Naive thymus-derived CD4-positive, alpha-beta T cell (primary cell): ENCODE measurements at regions of chr6 and their contacts with region 1.

Region 1: GRCh38 chr6:45377554-45378333 is at the start of gene SUPT3H:
- DNase-seq: peak; percentile 87 to 96 (median 89)
- ATAC-seq: peak; percentile 90
- H3K4me3 ChIP-seq: peak within 1 kb of the TSS; percentile 75
- H3K4me3 Mint-ChIP-seq: peak within 1 kb of the TSS; percentile 89 to 100 (median 98)
- H3K27ac ChIP-seq: peak within 1 kb of the TSS; percentile 86
- H3K27ac Mint-ChIP-seq: peak within 1 kb of the TSS; percentile 96 to 100 (median 98)
- H3K4me1 ChIP-seq: peaks cover 0 to 14% of the 10 kb centered on the region in 2 donors
- H3K4me1 Mint-ChIP-seq: peaks cover 14 to 35% (median 28%) of the 10 kb centered on the region in 7 donors
- H3K27me3 ChIP-seq: no peaks in the 10 kb centered on the region
- H3K27me3 Mint-ChIP-seq: no peaks in the 10 kb centered on the region
- total RNA-seq, gene SUPT3H: 10.0 to 16.0 (median 12.7) TPM

Region 2: GRCh38 chr6:44932651-44933091 is 445.1 kb before region 1 on chr6:
- CTCF ChIA-PET with region 1: interaction called, 3 read pairs
- POLR2A ChIA-PET with region 1: interaction called, 3 read pairs
- intact Hi-C with region 1: loop called (anchors 1 to 2 kb)
- DNase-seq: peak in 7 of 9 donors; percentile 46 to 66 (median 58)
- ATAC-seq: peak; percentile 91
- H3K4me3 ChIP-seq: peak overlapping the region; percentile 37
- H3K4me3 Mint-ChIP-seq: peak overlapping the region; percentile 78 to 98 (median 88)
- H3K27ac ChIP-seq: peak overlapping the region; percentile 71
- H3K27ac Mint-ChIP-seq: peak overlapping the region; percentile 92 to 99 (median 96)
- H3K4me1 ChIP-seq: peaks cover 17 to 42% of the 10 kb centered on the region in 2 donors
- H3K4me1 Mint-ChIP-seq: peaks cover 26 to 67% (median 60%) of the 10 kb centered on the region in 7 donors
- H3K27me3 ChIP-seq: no peaks in the 10 kb centered on the region
- H3K27me3 Mint-ChIP-seq: no peaks in the 10 kb centered on the region

Region 3: DNA sequence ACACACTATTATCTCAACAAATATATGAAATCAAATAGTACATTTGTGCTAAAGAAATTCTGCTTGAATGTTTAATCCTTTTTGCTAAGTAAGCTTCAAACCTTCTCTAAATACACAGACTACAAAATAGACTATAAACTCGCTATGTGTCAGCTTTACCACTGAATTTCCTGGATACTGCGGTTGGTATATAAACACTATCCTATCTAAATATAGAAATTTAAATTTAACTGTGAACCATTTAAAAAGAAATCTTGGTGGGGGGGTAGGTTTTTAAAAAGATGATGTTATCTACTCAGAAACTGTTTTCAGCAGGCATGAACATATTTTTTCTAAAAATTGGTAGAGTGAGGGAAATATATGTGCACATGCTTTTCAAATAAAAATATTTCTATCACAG is 356.1 kb before region 1 on chr6:
- CTCF ChIA-PET with region 1: no interaction called
- POLR2A ChIA-PET with region 1: no interaction called
- intact Hi-C with region 1: loop called in 1 of 2 experiments (anchors 5 kb)
- DNase-seq: peak in 7 of 9 donors; percentile 6 to 55 (median 28)
- ATAC-seq: peak; percentile 67
- H3K4me3 ChIP-seq: no peak overlapping the region
- H3K4me3 Mint-ChIP-seq: peak overlapping the region in 2 of 10 donors; percentile 6 to 7
- H3K27ac ChIP-seq: no peak overlapping the region
- H3K27ac Mint-ChIP-seq: peak overlapping the region in 2 of 9 donors; percentile 23 to 34
- H3K4me1 ChIP-seq: peaks cover 0 to 4% of the 10 kb centered on the region in 2 donors
- H3K4me1 Mint-ChIP-seq: peaks cover 9 to 20% (median 19%) of the 10 kb centered on the region in 7 donors
- H3K27me3 ChIP-seq: no peaks in the 10 kb centered on the region
- H3K27me3 Mint-ChIP-seq: no peaks in the 10 kb centered on the region

Region 4: DNA sequence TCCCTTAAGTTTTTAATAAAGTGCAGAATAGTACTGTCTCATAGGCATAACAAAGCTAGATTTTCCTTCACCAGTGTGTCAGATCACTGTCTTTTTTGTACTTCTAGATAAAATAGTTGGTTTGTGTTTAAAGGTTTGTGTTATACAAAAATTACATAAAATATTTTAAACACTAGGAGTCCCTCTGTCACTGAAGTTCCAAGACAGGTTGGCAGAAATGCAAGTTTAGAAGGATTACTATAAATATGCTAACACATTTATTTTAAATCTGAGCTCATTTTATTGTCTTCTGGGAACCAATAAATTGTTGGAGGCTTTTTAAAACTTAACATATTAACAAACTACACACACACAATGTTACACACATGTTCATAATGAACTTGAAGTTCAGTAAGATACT is 80.4 kb before region 1 on chr6:
- CTCF ChIA-PET with region 1: interaction called, 3 read pairs
- POLR2A ChIA-PET with region 1: interaction called, 10 read pairs
- intact Hi-C with region 1: loop called (anchors 1 to 5 kb)
- DNase-seq: no peak
- ATAC-seq: no peak
- H3K4me3 ChIP-seq: no peak overlapping the region
- H3K4me3 Mint-ChIP-seq: no peak overlapping the region
- H3K27ac ChIP-seq: no peak overlapping the region
- H3K27ac Mint-ChIP-seq: peak overlapping the region in 6 of 9 donors; percentile 4 to 56 (median 19)
- H3K4me1 ChIP-seq: peaks cover 0 to 14% of the 10 kb centered on the region in 2 donors
- H3K4me1 Mint-ChIP-seq: peaks cover 21 to 74% (median 43%) of the 10 kb centered on the region in 7 donors
- H3K27me3 ChIP-seq: no peaks in the 10 kb centered on the region
- H3K27me3 Mint-ChIP-seq: no peaks in the 10 kb centered on the region

Region 5: DNA sequence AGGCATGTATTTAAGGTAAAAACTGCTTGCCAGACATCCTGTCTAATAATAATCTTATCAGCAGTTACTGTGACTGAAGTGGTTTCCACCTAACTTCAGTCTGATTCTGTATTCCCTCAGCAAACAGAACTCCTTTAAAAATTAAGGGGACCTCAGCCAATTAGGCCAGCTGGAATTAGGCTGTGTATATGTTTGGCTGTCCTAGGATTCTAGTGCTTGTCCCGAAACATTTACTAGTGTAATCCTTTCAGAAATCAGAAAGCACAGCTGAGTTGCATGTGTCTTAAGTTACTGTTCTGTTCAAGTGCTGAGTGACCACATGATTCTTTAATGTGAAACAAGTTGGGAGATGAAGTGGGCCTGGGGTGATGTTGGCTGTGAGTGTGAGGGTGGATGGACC is 120.8 kb after region 1 on chr6:
- CTCF ChIA-PET with region 1: no interaction called
- POLR2A ChIA-PET with region 1: no interaction called
- intact Hi-C with region 1: no loop called
- DNase-seq: no peak
- ATAC-seq: no peak
- H3K4me3 ChIP-seq: no peak overlapping the region
- H3K4me3 Mint-ChIP-seq: no peak overlapping the region
- H3K27ac ChIP-seq: no peak overlapping the region
- H3K27ac Mint-ChIP-seq: no peak overlapping the region
- H3K4me1 ChIP-seq: peaks cover 34 to 37% of the 10 kb centered on the region in 2 donors
- H3K4me1 Mint-ChIP-seq: peaks cover 47 to 69% (median 50%) of the 10 kb centered on the region in 7 donors
- H3K27me3 ChIP-seq: no peaks in the 10 kb centered on the region
- H3K27me3 Mint-ChIP-seq: no peaks in the 10 kb centered on the region

Region 6: GRCh38 chr6:45586216-45587171 is 208.8 kb after region 1 on chr6:
- CTCF ChIA-PET with region 1: no interaction called
- POLR2A ChIA-PET with region 1: interaction called, 3 read pairs
- intact Hi-C with region 1: loop called (anchors 1 to 2 kb)
- DNase-seq: peak; percentile 11 to 93 (median 86)
- ATAC-seq: peak; percentile 93
- H3K4me3 ChIP-seq: peak overlapping the region; percentile 4
- H3K4me3 Mint-ChIP-seq: peak overlapping the region; percentile 76 to 89 (median 81)
- H3K27ac ChIP-seq: peak overlapping the region; percentile 9
- H3K27ac Mint-ChIP-seq: peak overlapping the region; percentile 59 to 97 (median 89)
- H3K4me1 ChIP-seq: peaks cover 48 to 67% of the 10 kb centered on the region in 2 donors
- H3K4me1 Mint-ChIP-seq: peaks cover 40 to 70% (median 69%) of the 10 kb centered on the region in 7 donors
- H3K27me3 ChIP-seq: no peaks in the 10 kb centered on the region
- H3K27me3 Mint-ChIP-seq: no peaks in the 10 kb centered on the region

Region 7: GRCh38 chr6:46129629-46130511 is 752.1 kb after region 1 on chr6 and contains the start of gene ENPP4:
- CTCF ChIA-PET with region 1: no interaction called
- POLR2A ChIA-PET with region 1: no interaction called
- intact Hi-C with region 1: loop called in 1 of 2 experiments (anchors 2 kb)
- DNase-seq: peak; percentile 78 to 98 (median 91)
- ATAC-seq: peak; percentile 100
- H3K4me3 ChIP-seq: peak within 1 kb of the TSS; percentile 98
- H3K4me3 Mint-ChIP-seq: peak within 1 kb of the TSS; percentile 94 to 99 (median 98)
- H3K27ac ChIP-seq: peak within 1 kb of the TSS; percentile 73
- H3K27ac Mint-ChIP-seq: peak within 1 kb of the TSS; percentile 86 to 97 (median 92)
- H3K4me1 ChIP-seq: peaks cover 15 to 18% of the 10 kb centered on the region in 2 donors
- H3K4me1 Mint-ChIP-seq: peaks cover 19 to 59% (median 46%) of the 10 kb centered on the region in 7 donors
- H3K27me3 ChIP-seq: no peaks in the 10 kb centered on the region
- H3K27me3 Mint-ChIP-seq: peaks cover 0 to 4% (median 0%) of the 10 kb centered on the region in 5 donors
- total RNA-seq, gene ENPP4: 3.8 to 9.8 (median 8.2) TPM